AG04449 (cell line): ENCODE measurements at regions of chr15 and their contacts with region 1.

Region 1: DNA sequence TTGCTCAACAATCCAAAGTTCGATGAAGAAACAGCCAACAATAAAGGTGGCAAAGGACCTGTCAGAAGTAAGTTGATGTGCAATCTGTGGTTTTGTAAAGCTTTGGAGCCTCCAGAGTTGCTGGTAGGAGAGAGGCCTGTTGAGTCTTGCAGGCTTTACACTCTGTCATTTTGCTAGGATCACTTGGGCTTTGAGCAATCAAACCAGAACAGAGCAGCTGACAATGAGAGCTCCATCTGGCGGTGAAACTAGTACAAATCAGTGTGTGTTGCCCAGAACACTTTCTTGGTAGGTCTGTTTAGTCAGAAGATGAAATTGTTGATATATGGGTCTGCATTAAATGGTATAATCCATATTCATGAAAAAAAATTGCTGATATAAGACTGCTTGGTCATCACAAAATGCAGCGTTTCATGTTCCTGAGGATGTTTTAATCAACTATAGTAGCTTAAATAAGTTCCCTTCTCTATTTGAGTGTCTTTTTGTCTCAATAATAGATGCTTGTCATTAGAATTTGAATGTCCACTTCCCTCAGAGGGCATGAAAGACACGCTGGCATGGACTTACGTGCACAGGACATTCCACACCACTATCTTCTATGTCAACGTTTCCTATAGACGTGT is 25.7 kb downstream of the TMOD2 start:
- DNase-seq: peak; percentile 21
- H3K4me3 ChIP-seq: no peak overlapping the region
- CTCF ChIP-seq: peak; percentile 82

Region 2: GRCh38 chr15:51622604-51623370 is 154.3 kb before region 1 on chr15 and contains the start of gene DMXL2:
- CTCF ChIA-PET with region 1: interaction called, 21 read pairs
- POLR2A ChIA-PET with region 1: interaction called, 3 read pairs
- DNase-seq: no peak
- H3K4me3 ChIP-seq: peak within 1 kb of the TSS; percentile 90
- CTCF ChIP-seq: no peak

Region 3: GRCh38 chr15:51649659-51650521 is 127.2 kb before region 1 on chr15:
- CTCF ChIA-PET with region 1: interaction called, 511 read pairs
- POLR2A ChIA-PET with region 1: interaction called, 3 read pairs
- DNase-seq: peak; percentile 9
- H3K4me3 ChIP-seq: no peak overlapping the region
- CTCF ChIP-seq: peak; percentile 67

Region 4: GRCh38 chr15:51680321-51680720 is 96.7 kb before region 1 on chr15:
- CTCF ChIA-PET with region 1: interaction called, 11 read pairs
- POLR2A ChIA-PET with region 1: no interaction called
- DNase-seq: no peak
- H3K4me3 ChIP-seq: no peak overlapping the region
- CTCF ChIP-seq: no peak

Region 5: GRCh38 chr15:51706291-51706690 is 70.8 kb before region 1 on chr15:
- CTCF ChIA-PET with region 1: interaction called, 10 read pairs
- POLR2A ChIA-PET with region 1: no interaction called
- DNase-seq: no peak
- H3K4me3 ChIP-seq: no peak overlapping the region
- CTCF ChIP-seq: no peak

Region 6: DNA sequence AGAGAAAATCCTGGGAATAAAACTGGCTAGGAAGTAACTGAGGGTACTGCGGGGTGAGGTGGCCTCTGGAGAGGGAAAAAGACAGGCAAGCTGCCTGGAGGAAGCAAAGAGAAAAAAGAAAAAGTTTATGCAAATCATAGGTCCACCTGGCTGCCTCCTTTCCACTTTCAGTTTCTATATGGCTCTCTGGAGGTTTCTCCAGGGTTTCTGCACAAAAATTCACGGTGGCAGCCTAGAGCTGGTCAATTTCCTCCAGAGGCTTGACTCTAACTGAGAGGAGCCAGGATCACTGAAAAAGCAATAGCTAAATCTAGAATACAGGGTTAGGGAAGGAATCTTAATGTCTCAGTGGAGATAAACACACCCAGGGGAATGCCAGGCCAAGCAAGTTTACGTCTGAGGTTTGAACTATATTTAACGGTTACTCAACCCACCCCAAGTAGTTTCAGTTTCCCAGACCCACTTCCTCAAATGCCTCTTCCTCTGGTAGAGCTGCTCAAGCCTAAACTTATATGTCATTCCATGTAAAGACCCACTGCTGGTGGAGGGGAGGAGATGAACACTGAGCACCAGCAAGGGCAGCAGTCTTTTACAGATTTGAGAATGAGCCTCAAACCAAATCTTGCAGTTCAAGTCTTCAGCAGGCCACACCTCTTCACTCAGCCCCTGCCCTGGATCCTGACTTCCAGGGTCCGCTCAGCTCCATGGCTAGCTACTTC is 45.4 kb before region 1 on chr15:
- CTCF ChIA-PET with region 1: interaction called, 21 read pairs
- POLR2A ChIA-PET with region 1: no interaction called
- DNase-seq: peak; percentile 47
- H3K4me3 ChIP-seq: no peak overlapping the region
- CTCF ChIP-seq: no peak

Region 7: DNA sequence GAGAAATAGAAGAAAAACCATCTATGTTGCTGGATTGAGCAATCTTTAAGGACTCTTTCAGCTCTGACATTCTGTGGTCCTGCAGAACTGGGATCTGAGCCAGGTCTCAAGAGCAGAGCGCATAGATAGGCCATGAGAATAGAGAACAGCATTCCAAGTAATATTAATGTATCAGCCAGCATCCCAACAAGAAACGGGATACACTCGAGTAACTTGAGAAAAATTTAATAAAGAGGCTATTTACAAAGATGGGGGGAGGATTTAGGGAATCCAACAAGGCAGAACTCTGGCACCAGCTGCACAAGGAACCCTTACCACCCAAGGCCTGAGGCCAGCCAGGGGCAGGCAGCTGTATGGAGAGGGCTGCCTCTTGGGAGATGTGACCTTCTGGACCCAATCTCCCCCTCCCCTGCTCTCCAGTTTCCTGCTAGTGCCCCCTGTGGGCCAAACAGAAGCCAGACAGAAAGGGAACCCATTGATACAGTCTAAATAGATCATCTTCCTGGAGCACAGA is 17.4 kb before region 1 on chr15:
- CTCF ChIA-PET with region 1: interaction called, 150 read pairs
- POLR2A ChIA-PET with region 1: no interaction called
- DNase-seq: peak; percentile 88
- H3K4me3 ChIP-seq: no peak overlapping the region
- CTCF ChIP-seq: peak; percentile 19

Region 8: DNA sequence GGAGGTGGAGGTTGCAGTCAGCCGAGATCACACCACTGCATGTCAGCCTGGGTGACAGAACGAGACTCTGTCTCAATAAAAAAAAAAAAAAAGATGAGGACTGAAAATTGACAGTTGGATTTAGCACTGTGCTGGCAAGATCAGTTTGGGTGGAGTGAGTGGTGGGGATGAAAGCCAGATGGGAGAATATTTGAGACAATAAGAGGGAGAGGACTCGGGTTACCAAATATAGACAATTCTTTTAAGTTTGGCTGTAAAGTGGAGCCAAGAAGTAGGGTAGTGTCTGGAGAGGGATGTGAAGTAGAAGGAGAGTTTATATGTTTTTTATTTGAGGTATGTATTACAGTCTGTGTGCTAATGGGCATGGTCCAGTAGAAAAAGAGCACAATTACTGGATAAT is 72.8 kb after region 1 on chr15:
- CTCF ChIA-PET with region 1: no interaction called
- POLR2A ChIA-PET with region 1: no interaction called
- DNase-seq: no peak
- H3K4me3 ChIP-seq: no peak overlapping the region
- CTCF ChIP-seq: no peak